ENCODE measurements at regions of chr12 and their contacts with region 1.

Region 1: DNA sequence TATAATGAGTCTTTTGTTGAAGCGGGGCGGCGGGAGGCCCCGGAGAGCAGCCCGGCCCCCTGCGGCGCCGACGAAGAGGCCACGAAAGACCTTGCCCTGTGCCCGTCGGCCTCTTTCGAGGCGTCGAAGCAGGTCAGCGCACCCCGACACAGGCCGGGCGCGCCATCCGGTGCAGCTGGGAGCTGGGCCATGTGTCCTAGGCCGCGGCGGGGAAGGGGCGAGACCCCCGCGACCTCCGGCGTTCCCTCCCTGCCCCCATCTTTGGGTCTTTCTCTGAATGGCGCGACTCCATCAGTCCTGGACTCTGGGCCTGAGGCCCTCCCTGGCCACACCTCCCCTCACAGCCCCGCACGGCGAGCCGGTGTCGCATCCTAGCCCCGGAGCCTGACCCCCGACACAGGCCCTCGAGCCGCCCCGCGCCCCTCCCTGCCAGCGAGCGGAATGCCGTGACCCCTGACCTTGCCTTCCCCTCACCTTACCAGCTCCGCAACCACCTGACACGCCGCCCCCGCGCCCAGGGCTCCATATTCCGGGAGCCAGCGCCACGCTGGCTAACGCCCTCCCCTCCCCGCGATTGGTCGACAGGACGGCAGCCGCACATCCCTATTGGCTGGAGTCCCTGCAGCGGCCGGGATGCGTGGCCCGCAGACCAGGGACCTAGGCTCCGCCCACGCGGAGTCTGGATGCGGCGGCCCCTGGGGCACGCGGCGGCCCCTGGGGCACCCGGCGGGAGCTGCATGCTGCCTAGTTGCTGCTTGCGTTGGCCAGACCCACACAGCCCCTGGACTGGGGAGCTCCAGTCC is at the start of gene SLC11A2:
- DNase-seq: peak; percentile 96
- H3K4me3 Mint-ChIP-seq: peak within 1 kb of the TSS; percentile 77
- H3K27ac Mint-ChIP-seq: peak within 1 kb of the TSS; percentile 99
- H3K4me1 Mint-ChIP-seq: peaks cover 34% of the 10 kb centered on the region
- H3K27me3 Mint-ChIP-seq: no peaks in the 10 kb centered on the region
- CTCF ChIP-seq: no peak
- total RNA-seq, gene SLC11A2: 45.6 and 60.9 TPM in 2 replicates

Region 2: GRCh38 chr12:50734409-50735263 is 291.4 kb before region 1 on chr12:
- CTCF ChIA-PET with region 1: no interaction called
- POLR2A ChIA-PET with region 1: no interaction called
- intact Hi-C with region 1: no loop called
- DNase-seq: peak; percentile 51
- H3K4me3 Mint-ChIP-seq: no peak overlapping the region
- H3K27ac Mint-ChIP-seq: no peak overlapping the region
- H3K4me1 Mint-ChIP-seq: peaks cover 14% of the 10 kb centered on the region
- H3K27me3 Mint-ChIP-seq: no peaks in the 10 kb centered on the region
- CTCF ChIP-seq: peak; percentile 59

Region 3: GRCh38 chr12:50786498-50787231 is 239.4 kb before region 1 on chr12:
- CTCF ChIA-PET with region 1: interaction called, 3 read pairs
- POLR2A ChIA-PET with region 1: interaction called, 17 read pairs
- intact Hi-C with region 1: no loop called
- DNase-seq: peak; percentile 98
- H3K4me3 Mint-ChIP-seq: peak overlapping the region; percentile 9
- H3K27ac Mint-ChIP-seq: peak overlapping the region; percentile 96
- H3K4me1 Mint-ChIP-seq: peaks cover 63% of the 10 kb centered on the region
- H3K27me3 Mint-ChIP-seq: no peaks in the 10 kb centered on the region
- CTCF ChIP-seq: no peak

Region 4: GRCh38 chr12:50986966-50987737 is 38.9 kb before region 1 on chr12:
- CTCF ChIA-PET with region 1: interaction called, 29 read pairs
- POLR2A ChIA-PET with region 1: interaction called, 132 read pairs
- intact Hi-C with region 1: no loop called
- DNase-seq: peak; percentile 67
- H3K4me3 Mint-ChIP-seq: no peak overlapping the region
- H3K27ac Mint-ChIP-seq: no peak overlapping the region
- H3K4me1 Mint-ChIP-seq: peaks cover 6% of the 10 kb centered on the region
- H3K27me3 Mint-ChIP-seq: no peaks in the 10 kb centered on the region
- CTCF ChIP-seq: peak; percentile 38

Region 5: DNA sequence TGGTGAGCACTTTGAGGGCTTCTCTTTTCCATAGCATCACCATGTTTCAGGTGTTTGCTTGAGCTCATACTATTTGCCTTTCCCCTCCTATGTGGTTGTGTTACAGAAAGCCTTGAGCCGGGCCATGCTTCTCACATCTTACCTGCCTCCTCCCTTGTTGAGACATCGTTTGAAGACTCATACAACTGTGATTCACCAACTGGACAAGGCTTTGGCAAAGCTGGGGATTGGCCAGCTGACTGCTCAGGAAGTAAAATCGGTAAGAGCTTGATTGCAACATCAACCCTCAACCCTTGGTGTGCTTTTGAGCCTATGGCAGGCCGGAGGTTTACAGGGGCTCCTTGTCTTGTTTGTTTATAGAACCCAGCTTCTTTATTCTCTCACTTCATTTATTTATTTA is 30.2 kb after region 1 on chr12:
- CTCF ChIA-PET with region 1: interaction called, 3 read pairs
- POLR2A ChIA-PET with region 1: interaction called, 16 read pairs
- intact Hi-C with region 1: no loop called
- DNase-seq: peak; percentile 97
- H3K4me3 Mint-ChIP-seq: peak overlapping the region; percentile 3
- H3K27ac Mint-ChIP-seq: peak overlapping the region; percentile 3
- H3K4me1 Mint-ChIP-seq: peaks cover 15% of the 10 kb centered on the region
- H3K27me3 Mint-ChIP-seq: no peaks in the 10 kb centered on the region
- CTCF ChIP-seq: no peak

Region 6: GRCh38 chr12:51077971-51078370 is 51.9 kb after region 1 on chr12:
- CTCF ChIA-PET with region 1: no interaction called
- POLR2A ChIA-PET with region 1: interaction called, 43 read pairs
- intact Hi-C with region 1: no loop called
- DNase-seq: no peak
- H3K4me3 Mint-ChIP-seq: peak overlapping the region; percentile 2
- H3K27ac Mint-ChIP-seq: peak overlapping the region; percentile 5
- H3K4me1 Mint-ChIP-seq: peaks cover 22% of the 10 kb centered on the region
- H3K27me3 Mint-ChIP-seq: no peaks in the 10 kb centered on the region
- CTCF ChIP-seq: no peak

Region 7: DNA sequence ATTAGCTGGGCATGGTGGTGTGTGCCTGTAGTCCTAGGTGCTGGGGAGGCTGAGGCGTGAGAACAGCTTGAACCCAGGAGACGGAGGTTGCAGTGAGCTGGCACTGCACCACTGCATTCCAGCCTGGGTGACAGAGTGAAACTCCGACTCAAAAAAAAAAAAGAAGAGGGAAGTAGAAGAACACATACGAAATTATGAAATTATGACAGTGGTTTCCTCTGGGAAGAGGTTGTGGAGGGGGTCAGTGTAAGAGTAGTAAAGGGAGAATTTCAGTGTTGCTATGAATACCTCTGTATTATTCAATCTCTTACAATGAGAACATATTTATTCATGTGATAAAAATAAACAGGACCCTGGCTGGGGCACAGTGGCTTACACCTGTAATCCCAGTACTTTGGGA is 82.1 kb after region 1 on chr12:
- CTCF ChIA-PET with region 1: no interaction called
- POLR2A ChIA-PET with region 1: no interaction called
- intact Hi-C with region 1: no loop called
- DNase-seq: no peak
- H3K4me3 Mint-ChIP-seq: no peak overlapping the region
- H3K27ac Mint-ChIP-seq: no peak overlapping the region
- H3K4me1 Mint-ChIP-seq: no peaks in the 10 kb centered on the region
- H3K27me3 Mint-ChIP-seq: no peaks in the 10 kb centered on the region
- CTCF ChIP-seq: no peak